ENCODE measurements at regions of chr12 and their contacts with region 1.

Region 1: DNA sequence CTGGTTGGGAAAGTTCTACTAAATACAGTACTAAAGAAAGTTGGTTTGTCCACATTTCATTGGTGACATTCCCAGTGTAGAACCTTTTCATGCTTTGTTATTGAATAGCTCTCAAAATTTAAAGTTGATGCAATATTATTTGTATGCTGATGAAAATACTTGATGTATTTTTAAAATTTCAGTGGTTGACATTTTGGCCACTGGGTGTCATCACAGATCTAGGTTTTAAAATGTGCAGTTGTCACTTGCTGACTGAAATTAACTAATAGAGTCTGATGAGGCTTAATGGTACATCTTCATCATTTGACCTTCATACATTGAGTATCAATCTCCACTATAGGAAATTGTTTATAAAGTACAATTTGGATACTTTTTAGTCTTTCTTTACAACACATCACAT is 37.1 kb downstream of the CMAS start:
- DNase-seq: no peak
- H3K4me3 ChIP-seq: no peak overlapping the region
- H3K27ac ChIP-seq: no peak overlapping the region
- H3K4me1 ChIP-seq: no peaks in the 10 kb centered on the region
- H3K27me3 ChIP-seq: no peaks in the 10 kb centered on the region
- CTCF ChIP-seq: peak in 2 of 3 experiments; percentile 50 to 52

Region 2: DNA sequence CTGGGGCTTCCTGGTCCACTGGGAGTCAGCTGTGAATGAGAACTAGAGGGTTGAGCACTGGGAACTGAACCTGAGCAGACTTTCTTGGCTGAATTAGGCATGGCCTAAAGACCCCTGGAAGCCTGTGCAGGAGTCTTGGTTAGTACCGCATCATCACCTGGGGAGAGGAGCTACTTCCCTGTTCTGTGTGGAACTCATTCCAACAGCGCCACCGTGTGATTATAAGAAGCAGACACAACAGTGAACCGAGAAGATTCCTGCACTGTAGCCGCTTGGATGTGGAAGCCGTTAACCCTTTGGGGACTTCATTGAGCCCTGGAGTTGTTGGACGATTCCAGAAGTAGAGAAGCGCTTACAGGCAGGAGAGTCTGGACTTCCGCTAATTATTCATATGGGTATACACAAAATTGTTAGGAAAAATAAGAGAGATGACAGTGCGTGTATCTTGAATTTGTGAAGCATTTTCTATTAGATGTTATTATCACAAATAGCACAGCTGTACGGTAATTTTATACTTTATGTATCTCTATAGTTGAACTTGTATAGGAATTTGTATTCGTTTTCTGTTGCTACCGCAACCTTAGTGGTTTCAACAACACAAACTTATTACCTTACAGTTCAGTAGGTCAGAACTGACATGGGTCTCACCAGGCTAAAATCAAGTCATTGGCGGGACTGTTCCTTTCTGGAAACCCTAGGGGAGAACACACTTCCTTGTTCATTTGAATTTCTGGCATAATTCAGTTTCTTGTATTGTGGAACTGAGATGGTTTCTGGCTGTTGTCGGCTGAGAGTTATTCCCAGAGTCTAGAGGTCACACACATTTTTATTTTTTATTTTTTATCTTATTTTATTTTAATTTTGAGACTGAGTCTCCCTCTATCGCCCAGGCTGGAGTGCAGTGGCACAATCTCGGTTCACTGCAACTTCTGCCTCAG is 360.5 kb after region 1 on chr12:
- intact Hi-C with region 1: loop called (anchors 1 kb)
- DNase-seq: peak in 1 of 2 donors; percentile 73
- H3K4me3 ChIP-seq: no peak overlapping the region
- H3K27ac ChIP-seq: no peak overlapping the region
- H3K4me1 ChIP-seq: no peaks in the 10 kb centered on the region
- H3K27me3 ChIP-seq: no peaks in the 10 kb centered on the region
- CTCF ChIP-seq: peak; percentile 53 to 82 (median 75)